IMR-90 (cell line): ENCODE measurements at regions of chr18 and their contacts with region 1.

Region 1: GRCh38 chr18:57353940-57354461 is 1.6 kb downstream of the ST8SIA3 start:
- DNase-seq: peak; percentile 17
- ATAC-seq: peak; percentile 100
- H3K4me3 ChIP-seq: no peak overlapping the region
- H3K27ac ChIP-seq: no peak overlapping the region
- H3K4me1 ChIP-seq: no peaks in the 10 kb centered on the region
- H3K27me3 ChIP-seq: peaks cover 23% of the 10 kb centered on the region
- CTCF ChIP-seq: no peak
- POLR2A ChIP-seq: no peak
- RAD21 ChIP-seq: no peak

Region 2: GRCh38 chr18:57107140-57107832 is 246.7 kb before region 1 on chr18:
- CTCF ChIA-PET with region 1: no interaction called
- POLR2A ChIA-PET with region 1: no interaction called
- dilution Hi-C with region 1: no loop called
- in situ Hi-C with region 1: no loop called
- intact Hi-C with region 1: loop called (anchors 5 kb)
- DNase-seq: peak; percentile 43
- ATAC-seq: peak; percentile 71
- H3K4me3 ChIP-seq: no peak overlapping the region
- H3K27ac ChIP-seq: no peak overlapping the region
- H3K4me1 ChIP-seq: no peaks in the 10 kb centered on the region
- H3K27me3 ChIP-seq: no peaks in the 10 kb centered on the region
- CTCF ChIP-seq: no peak
- POLR2A ChIP-seq: no peak
- RAD21 ChIP-seq: no peak

Region 3: DNA sequence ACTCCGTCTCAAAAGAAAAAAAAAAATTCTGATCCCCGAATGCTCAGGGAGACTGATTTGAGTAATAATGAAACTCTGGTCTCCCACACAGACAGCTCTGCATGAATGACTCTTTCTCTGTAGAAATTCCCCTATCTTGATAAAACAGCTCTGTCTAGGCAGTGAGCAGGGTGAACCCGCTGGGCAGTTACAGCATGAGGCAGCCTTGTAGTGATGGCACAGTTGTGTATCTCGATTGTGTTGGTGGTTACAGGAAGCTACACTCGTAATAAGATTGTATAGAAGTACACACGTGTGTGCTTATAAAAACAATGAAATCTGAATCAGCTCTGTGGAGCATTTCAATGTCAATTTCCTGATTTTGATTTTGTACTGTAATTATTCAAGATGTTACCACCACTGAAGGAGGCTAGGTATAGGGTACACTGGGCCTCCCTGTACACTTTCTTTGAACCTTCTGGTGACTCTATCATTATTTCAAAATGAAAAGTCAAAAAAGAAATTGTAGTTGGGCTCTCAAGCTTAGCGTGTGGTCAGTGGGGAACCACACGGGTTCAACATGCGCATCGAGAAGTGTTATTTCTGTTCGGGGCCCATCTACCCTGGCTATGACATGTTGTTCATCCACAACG is 484.0 kb after region 1 on chr18:
- CTCF ChIA-PET with region 1: no interaction called
- POLR2A ChIA-PET with region 1: no interaction called
- dilution Hi-C with region 1: no loop called
- in situ Hi-C with region 1: no loop called
- intact Hi-C with region 1: no loop called
- DNase-seq: peak; percentile 37
- ATAC-seq: no peak
- H3K4me3 ChIP-seq: no peak overlapping the region
- H3K27ac ChIP-seq: no peak overlapping the region
- H3K4me1 ChIP-seq: peaks cover 8% of the 10 kb centered on the region
- H3K27me3 ChIP-seq: no peaks in the 10 kb centered on the region
- CTCF ChIP-seq: no peak
- POLR2A ChIP-seq: no peak
- RAD21 ChIP-seq: no peak